Naive thymus-derived CD4-positive, alpha-beta T cell (primary cell): ENCODE measurements at regions of chr10 and their contacts with region 1.

Region 1: GRCh38 chr10:12526311-12526710 is 177.0 kb downstream of the CAMK1D start:
- DNase-seq: no peak
- ATAC-seq: no peak
- H3K4me3 ChIP-seq: no peak overlapping the region
- H3K4me3 Mint-ChIP-seq: peak overlapping the region in 2 of 10 donors; percentile 5 to 13
- H3K27ac ChIP-seq: no peak overlapping the region
- H3K27ac Mint-ChIP-seq: peak overlapping the region in 6 of 9 donors; percentile 7 to 81 (median 46)
- H3K4me1 ChIP-seq: no peaks in the 10 kb centered on the region
- H3K4me1 Mint-ChIP-seq: peaks cover 0 to 28% (median 21%) of the 10 kb centered on the region in 7 donors
- H3K27me3 ChIP-seq: no peaks in the 10 kb centered on the region
- H3K27me3 Mint-ChIP-seq: peaks cover 0 to 3% (median 0%) of the 10 kb centered on the region in 5 donors

Region 2: DNA sequence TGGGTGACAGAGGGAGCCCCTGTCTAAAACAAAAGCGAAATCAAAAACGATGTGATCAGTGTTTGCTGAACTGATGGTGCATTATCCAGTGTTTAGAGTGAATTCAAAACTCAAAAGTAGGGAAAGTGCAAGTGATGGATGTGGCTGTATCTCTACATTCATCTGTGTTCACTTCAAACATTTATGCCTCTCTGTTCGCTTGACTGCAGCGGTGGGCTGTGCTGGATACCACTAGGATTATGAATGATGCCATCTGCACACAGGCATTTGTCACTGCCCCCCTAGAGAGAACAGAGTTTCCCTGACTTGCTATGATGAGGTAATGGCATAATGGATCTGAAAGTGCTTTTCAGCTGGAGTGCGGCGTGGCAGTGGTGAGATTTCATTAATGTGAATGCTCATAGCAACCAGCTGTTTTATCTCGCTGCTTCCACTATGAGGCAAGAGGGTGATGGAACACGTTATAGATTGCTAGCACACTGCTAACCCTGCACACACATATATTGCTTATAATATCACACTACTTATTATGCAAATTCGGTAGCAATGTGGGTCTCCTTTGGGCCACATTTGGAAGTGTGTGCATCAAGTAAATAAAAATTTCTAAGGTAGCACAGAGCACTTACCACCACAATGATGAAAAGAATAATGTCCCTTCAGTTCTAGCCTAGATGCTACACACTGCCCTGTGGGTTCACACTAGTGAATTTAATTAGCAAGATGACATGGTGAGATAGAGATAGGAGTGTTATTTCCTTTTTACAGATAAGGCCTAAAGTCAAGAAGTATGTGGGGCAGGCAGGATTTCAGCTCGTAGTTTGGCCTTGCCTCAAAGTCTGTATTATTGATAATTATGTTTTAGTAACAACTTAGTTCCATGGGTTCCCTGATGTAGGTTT is 12.3 kb before region 1 on chr10:
- CTCF ChIA-PET with region 1: no interaction called
- POLR2A ChIA-PET with region 1: no interaction called
- intact Hi-C with region 1: loop called in 1 of 2 experiments (anchors 2 kb)
- DNase-seq: no peak
- ATAC-seq: peak; percentile 68
- H3K4me3 ChIP-seq: no peak overlapping the region
- H3K4me3 Mint-ChIP-seq: no peak overlapping the region
- H3K27ac ChIP-seq: no peak overlapping the region
- H3K27ac Mint-ChIP-seq: peak overlapping the region in 4 of 9 donors; percentile 26 to 43 (median 36)
- H3K4me1 ChIP-seq: peaks cover 0 to 20% of the 10 kb centered on the region in 2 donors
- H3K4me1 Mint-ChIP-seq: peaks cover 8 to 50% (median 37%) of the 10 kb centered on the region in 7 donors
- H3K27me3 ChIP-seq: no peaks in the 10 kb centered on the region
- H3K27me3 Mint-ChIP-seq: no peaks in the 10 kb centered on the region

Region 3: GRCh38 chr10:12566161-12567115 is 40.1 kb after region 1 on chr10:
- CTCF ChIA-PET with region 1: no interaction called
- POLR2A ChIA-PET with region 1: no interaction called
- intact Hi-C with region 1: no loop called
- DNase-seq: no peak
- ATAC-seq: no peak
- H3K4me3 ChIP-seq: no peak overlapping the region
- H3K4me3 Mint-ChIP-seq: no peak overlapping the region
- H3K27ac ChIP-seq: no peak overlapping the region
- H3K27ac Mint-ChIP-seq: peak overlapping the region in 6 of 9 donors; percentile 33 to 77 (median 66)
- H3K4me1 ChIP-seq: no peaks in the 10 kb centered on the region
- H3K4me1 Mint-ChIP-seq: peaks cover 15 to 56% (median 40%) of the 10 kb centered on the region in 7 donors
- H3K27me3 ChIP-seq: no peaks in the 10 kb centered on the region
- H3K27me3 Mint-ChIP-seq: no peaks in the 10 kb centered on the region